ENCODE measurements at regions of chrX and their contacts with region 1.

Region 1: GRCh38 chrX:96551322-96551872 is 133.2 kb upstream of the DIAPH2 start:
- DNase-seq: no peak
- ATAC-seq: no peak
- H3K4me3 ChIP-seq: no peak overlapping the region
- H3K27ac ChIP-seq: no peak overlapping the region
- H3K4me1 ChIP-seq: no peaks in the 10 kb centered on the region
- H3K27me3 ChIP-seq: no peaks in the 10 kb centered on the region; the same call in 1 of the 2 replicates
- CTCF ChIP-seq: no peak
- POLR2A ChIP-seq: no peak
- RAD21 ChIP-seq: no peak

Region 2: DNA sequence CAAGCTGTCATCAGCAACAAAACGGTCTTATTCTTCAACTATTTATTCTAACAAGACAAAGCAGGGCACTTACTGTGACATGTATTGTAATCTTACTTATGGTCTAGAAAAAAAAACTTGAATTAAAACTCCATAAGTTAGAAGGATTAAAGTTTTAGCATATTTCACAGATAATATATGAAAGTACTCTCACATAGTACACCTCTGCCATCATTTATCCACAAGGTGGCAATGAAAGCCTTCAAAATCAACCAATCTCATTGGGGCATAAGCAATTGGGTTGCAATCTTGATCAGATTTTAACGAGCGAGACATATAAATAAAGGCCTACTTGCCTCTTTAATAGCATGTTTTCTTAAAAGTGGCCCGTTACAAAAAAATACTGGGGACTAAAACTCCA is 1494.5 kb before region 1 on chrX:
- CTCF ChIA-PET with region 1: no interaction called
- POLR2A ChIA-PET with region 1: no interaction called
- dilution Hi-C with region 1: no loop called
- in situ Hi-C with region 1: no loop called
- intact Hi-C with region 1: no loop called
- DNase-seq: peak; percentile 4
- ATAC-seq: no peak
- H3K4me3 ChIP-seq: no peak overlapping the region
- H3K27ac ChIP-seq: no peak overlapping the region
- H3K4me1 ChIP-seq: no peaks in the 10 kb centered on the region
- H3K27me3 ChIP-seq: no peaks in the 10 kb centered on the region; the same call in 1 of the 2 replicates
- CTCF ChIP-seq: peak; percentile 33
- POLR2A ChIP-seq: no peak
- RAD21 ChIP-seq: peak; percentile 36; the same call in 1 of the 2 replicates

Region 3: DNA sequence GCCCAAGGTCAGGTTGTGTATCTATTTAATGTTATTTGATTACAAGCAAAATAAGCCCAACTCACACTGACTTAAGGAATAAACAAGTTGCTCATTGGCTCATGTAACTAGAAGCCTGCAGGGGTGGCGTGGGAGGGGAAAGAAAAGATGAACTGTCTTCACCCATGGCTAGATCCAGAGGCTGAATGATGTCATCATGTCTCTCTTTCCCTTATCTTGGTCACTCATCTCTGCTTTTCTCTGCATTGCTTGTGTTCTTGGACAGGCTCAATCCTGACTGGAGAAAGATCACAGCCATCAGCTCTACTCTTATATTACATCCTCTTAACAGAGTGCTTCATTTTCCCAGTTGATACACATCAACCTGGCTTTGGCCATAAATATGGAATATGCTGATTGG is 156.8 kb before region 1 on chrX:
- CTCF ChIA-PET with region 1: no interaction called
- POLR2A ChIA-PET with region 1: no interaction called
- dilution Hi-C with region 1: no loop called
- in situ Hi-C with region 1: no loop called
- intact Hi-C with region 1: loop called (anchors 5 kb)
- DNase-seq: peak; percentile 41
- ATAC-seq: peak; percentile 53
- H3K4me3 ChIP-seq: no peak overlapping the region
- H3K27ac ChIP-seq: no peak overlapping the region
- H3K4me1 ChIP-seq: no peaks in the 10 kb centered on the region
- H3K27me3 ChIP-seq: no peaks in the 10 kb centered on the region; the same call in 1 of the 2 replicates
- CTCF ChIP-seq: no peak
- POLR2A ChIP-seq: no peak
- RAD21 ChIP-seq: no peak

Region 4: DNA sequence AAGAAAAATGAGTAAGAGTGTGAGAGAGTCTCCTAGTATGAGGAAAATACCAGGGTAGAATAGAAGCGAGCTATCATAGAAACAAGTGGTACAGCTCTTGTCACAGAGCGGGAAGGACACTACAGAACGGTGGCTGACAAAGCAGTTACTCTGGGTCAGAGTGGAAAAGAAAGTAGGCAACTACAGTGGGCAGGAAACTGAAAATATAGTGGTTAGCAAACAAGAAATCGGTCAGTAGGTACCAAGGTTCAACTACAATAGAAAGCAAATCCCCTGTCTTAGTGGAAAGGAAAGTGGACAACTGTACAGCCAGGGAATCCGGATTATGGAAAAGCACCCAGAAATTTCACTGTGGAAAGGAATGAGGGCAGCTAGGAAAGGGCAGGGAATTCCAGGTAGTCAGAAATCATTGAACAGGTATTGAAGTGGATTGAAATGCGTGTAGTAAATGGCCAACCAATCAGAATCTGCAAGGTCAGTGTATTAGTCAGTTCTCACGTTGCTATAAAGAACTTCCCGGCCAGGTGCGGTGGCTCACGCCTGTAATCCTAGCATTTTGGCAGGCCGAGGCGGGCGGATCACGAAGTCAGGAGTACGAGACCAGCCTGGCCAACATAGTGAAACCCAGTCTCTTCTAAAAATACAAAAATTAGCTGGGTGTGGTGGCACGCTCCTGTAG is 86.4 kb before region 1 on chrX:
- CTCF ChIA-PET with region 1: no interaction called
- POLR2A ChIA-PET with region 1: interaction called, 10 read pairs
- dilution Hi-C with region 1: no loop called
- in situ Hi-C with region 1: no loop called
- intact Hi-C with region 1: no loop called
- DNase-seq: no peak
- ATAC-seq: no peak
- H3K4me3 ChIP-seq: no peak overlapping the region
- H3K27ac ChIP-seq: no peak overlapping the region
- H3K4me1 ChIP-seq: no peaks in the 10 kb centered on the region
- H3K27me3 ChIP-seq: no peaks in the 10 kb centered on the region; the same call in 1 of the 2 replicates
- CTCF ChIP-seq: no peak
- POLR2A ChIP-seq: no peak
- RAD21 ChIP-seq: no peak

Measured in IMR-90 (cell line).